Activated T-helper 1 cell treated with anti-CD3 and anti-CD28 coated beads, Interleukin-12 subunit alpha, Interleukin-12 subunit beta, Interleukin-2, Interleukin-4 antibody, amounts not matched to agents 30 ng/mL and 10 ng/mL and 1 ng/mL, durations not matched to agents 14 hours and 24 hours and 36 hours (primary cell): ENCODE measurements at regions of chr13 and their contacts with region 1.

Region 1: DNA sequence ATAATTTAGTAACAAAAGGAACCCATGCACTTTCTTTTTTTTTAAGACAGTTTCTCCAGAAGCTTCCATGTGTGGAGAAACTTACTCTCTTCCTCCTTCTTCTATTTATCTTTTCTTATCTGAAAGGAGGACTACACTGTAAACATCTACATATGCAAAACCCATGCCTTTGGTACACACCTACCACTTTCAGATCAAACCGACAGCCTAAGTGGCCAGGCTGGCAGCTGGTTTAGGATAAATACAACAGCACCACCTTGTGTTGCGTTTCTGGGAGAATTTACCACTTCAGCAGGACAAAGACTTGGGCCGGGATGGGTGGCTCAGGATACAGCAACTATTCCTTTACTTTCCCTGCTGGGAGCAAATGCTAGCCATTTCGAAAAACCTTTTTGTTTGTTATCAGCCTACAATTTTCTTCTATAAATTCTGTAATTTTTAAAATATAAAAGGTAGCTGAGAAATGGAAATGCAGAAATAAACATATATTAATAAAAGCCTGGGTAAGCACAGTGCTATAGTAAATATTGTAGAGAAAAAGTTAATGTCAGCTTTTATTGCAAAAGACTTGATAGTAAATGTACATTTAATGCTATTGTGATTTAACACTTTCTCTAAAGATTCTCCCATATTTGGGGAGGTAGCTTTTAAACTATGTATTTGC is 94.0 kb upstream of the RFC3 start:
- DNase-seq: peak; percentile 51
- H3K4me3 Mint-ChIP-seq: no peak overlapping the region
- H3K27ac Mint-ChIP-seq: peak overlapping the region; percentile 84
- H3K4me1 Mint-ChIP-seq: peaks cover 49% of the 10 kb centered on the region
- H3K27me3 Mint-ChIP-seq: no peaks in the 10 kb centered on the region

Region 2: GRCh38 chr13:33017323-33017929 is 706.5 kb before region 1 on chr13:
- intact Hi-C with region 1: loop called (anchors 2 kb)
- DNase-seq: peak; percentile 29
- H3K4me3 Mint-ChIP-seq: peak overlapping the region; percentile 78
- H3K27ac Mint-ChIP-seq: peak overlapping the region; percentile 41
- H3K4me1 Mint-ChIP-seq: peaks cover 21% of the 10 kb centered on the region
- H3K27me3 Mint-ChIP-seq: peaks cover 56% of the 10 kb centered on the region

Region 3: DNA sequence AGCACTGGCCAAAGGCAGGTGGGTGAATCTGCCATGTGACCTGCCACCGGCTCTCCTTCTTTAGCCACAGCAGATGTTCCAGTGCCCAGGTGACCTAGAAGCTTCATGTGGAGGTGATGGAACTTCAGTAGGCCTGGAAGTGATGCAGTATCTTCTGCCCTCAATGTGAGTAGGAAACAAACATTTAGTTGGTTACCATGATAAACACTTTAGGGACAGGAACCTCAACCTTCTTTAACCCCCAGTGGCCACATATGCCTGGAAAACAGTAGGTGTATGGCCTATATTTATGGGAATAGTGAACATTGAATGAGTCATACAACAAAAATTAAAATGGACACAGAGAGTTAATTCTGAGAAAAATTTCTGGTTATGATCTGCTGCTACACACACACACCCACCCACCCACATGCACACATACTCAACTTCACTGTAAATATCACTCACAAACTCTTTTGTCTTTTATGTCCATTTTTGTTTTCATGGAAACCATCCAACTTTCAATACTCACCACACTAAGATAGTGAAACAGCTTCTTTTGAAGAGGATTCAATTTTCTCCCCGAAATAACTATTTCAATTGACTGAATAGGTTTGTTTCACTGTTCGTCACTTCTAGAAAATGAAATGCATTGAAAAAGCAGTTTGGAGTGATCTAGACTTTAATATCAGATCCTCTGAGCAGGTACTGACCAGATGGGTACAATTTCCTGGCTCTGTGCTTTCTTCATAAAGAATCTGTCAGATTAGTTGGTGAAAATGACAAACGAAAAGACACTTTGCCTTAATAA is 535.6 kb before region 1 on chr13:
- intact Hi-C with region 1: loop called (anchors 5 kb)
- DNase-seq: no peak
- H3K4me3 Mint-ChIP-seq: peak overlapping the region; percentile 34
- H3K27ac Mint-ChIP-seq: peak overlapping the region; percentile 99
- H3K4me1 Mint-ChIP-seq: peaks cover 52% of the 10 kb centered on the region
- H3K27me3 Mint-ChIP-seq: no peaks in the 10 kb centered on the region

Region 4: DNA sequence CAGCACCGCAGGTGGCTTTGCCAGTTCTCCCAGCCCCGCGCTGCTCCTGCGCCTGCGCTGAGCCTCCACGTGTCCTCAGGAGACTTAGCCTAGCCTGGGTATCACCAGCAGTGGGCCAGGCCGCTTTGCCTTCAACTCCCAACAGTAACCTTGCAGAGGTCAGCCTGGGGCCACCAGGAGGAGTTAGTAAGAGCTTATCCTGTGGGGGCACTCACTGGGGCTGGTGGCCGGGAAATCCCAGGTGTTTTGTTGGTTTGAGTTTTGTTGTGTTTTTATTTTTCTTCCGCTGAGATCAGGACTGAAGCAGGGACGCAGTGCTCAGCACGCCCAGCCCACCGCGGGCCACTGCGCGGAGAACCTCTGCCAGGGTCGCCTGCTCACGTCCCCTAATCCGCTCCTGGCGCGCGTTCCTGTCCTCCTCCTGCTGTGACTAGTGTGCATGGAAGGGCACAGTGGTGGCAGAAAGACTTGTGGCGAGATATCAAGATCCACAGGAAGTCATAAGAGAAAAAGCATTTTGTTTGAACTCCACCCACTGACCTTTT is 113.4 kb before region 1 on chr13:
- intact Hi-C with region 1: loop called (anchors 1 kb)
- DNase-seq: peak; percentile 8
- H3K4me3 Mint-ChIP-seq: peak overlapping the region; percentile 82
- H3K27ac Mint-ChIP-seq: peak overlapping the region; percentile 95
- H3K4me1 Mint-ChIP-seq: peaks cover 46% of the 10 kb centered on the region
- H3K27me3 Mint-ChIP-seq: no peaks in the 10 kb centered on the region

Region 5: DNA sequence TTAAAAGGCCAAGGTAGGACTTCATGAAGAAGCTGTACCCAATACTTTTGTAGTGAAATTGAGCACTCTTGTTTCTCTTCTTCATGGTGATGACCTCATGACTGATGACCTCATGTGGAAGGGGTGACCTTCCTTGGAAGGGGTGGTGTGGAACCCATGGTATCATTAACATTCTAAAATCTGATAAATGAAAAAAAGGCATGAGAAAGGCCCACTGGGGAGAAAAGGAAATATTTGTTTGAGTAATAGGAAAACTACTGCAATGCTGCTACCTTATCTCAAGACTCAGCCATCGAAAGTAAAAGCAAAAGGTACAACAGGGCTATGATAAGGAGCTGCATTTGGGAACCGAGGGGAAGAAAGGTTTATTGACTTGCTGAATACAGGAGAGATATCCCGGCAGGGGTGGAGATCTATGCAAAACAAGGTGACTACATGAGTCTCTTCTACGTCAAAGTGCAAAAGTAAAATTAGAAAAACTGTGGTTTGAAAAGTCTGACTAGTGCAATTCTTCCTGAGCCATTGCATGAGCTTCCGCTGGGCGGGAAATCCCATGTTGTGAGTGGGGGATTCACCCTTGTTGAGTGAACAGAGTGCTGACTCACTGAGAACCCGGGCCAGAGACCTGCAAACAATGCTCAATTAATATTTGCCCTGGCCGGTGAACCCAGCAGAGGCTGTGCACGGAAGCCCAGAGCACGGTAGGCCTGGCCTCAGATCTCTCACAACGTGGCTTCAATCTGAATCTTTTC is 44.8 kb before region 1 on chr13:
- intact Hi-C with region 1: loop called (anchors 1 kb)
- DNase-seq: peak; percentile 71
- H3K4me3 Mint-ChIP-seq: peak overlapping the region; percentile 73
- H3K27ac Mint-ChIP-seq: peak overlapping the region; percentile 91
- H3K4me1 Mint-ChIP-seq: peaks cover 36% of the 10 kb centered on the region
- H3K27me3 Mint-ChIP-seq: peaks cover 2% of the 10 kb centered on the region

Region 6: DNA sequence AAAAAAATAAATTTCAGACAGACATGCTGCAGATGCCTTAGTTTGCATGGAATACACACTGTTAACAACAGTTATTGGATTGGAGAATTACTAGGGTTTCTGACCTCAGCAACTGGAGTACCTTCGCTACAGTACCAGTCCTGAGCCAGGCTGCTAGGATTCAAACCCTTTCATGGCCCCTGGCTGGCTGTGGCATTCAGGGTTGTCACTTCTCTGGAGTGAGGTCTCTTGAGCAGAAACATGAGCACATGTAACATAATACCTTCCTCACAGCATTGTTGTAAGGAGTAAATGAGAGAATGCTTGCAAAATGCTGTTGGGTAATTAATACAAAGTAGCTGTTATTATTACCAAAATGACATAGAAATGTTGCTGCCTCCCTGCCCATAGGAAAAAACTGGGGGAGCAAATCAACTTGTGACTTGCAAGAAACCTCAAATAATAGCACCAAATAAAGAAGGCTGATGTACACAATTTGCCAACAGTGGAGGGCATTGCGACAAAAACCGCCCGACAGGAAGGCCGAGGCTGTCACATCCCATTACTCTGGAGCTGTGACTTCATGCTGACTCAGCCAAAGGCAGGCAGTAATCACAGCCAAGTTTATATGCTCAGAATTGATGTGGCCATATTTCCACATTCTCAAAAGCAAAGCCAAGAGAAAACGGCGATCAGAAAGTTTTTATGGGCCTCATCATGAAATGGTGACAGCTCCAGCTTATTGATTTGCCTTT is 194.5 kb after region 1 on chr13:
- intact Hi-C with region 1: no loop called
- DNase-seq: no peak
- H3K4me3 Mint-ChIP-seq: no peak overlapping the region
- H3K27ac Mint-ChIP-seq: no peak overlapping the region
- H3K4me1 Mint-ChIP-seq: no peaks in the 10 kb centered on the region
- H3K27me3 Mint-ChIP-seq: no peaks in the 10 kb centered on the region

Region 7: GRCh38 chr13:35164324-35164932 is 1440.5 kb after region 1 on chr13:
- intact Hi-C with region 1: loop called (anchors 5 kb)
- DNase-seq: no peak
- H3K4me3 Mint-ChIP-seq: no peak overlapping the region
- H3K27ac Mint-ChIP-seq: no peak overlapping the region
- H3K4me1 Mint-ChIP-seq: peaks cover 10% of the 10 kb centered on the region
- H3K27me3 Mint-ChIP-seq: no peaks in the 10 kb centered on the region